ENCODE measurements at regions of chr5 and their contacts with region 1.

Region 1: DNA sequence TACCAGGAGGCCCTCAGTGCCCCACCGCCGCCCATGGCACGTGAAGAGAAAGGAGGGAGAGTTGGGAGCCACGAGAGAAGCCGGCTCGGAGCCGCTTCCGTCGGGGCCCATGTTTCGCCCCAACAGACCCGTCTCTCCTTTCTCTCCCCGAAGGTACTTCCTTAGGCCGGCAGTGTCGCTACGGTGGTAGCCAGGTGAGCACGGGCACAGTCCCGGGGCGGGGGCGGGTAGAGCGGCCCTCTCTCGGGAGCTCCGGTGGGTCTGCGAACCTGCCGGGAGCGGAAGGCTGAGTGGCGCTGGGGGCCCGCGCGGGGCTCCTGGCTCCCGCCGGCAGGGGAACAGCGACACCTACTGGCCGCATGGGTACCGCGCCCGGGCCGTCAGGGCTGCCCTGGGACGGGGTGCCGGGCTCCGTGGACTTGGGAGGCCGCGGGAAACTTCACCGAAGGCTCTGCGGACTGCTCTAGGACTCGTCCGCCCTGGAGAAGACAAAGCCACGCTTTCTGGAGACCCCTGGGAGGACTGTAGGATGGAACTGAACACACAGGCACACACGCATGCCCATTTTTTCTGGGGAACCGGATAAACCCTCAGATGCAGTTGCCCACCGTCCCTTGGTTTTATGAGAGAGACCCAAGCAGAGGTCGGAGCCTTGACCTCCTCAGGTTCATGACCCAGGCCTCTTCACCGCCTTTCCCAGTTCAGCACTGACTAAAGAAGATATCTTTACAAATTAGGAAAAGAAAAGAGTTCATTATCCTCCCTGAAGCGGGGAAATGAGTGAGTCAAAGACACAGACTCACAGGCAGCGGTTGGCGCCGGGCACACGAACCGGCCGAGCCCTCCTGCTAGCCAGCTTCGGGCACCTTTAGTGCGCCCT is 202.5 kb downstream of the MEF2C start:
- DNase-seq: peak; percentile 53 to 85 (median 78)
- H3K4me3 ChIP-seq: peak overlapping the region in 2 of 4 donors; percentile 27 to 45
- H3K27ac ChIP-seq: no peak overlapping the region
- H3K4me1 ChIP-seq: peaks cover 2 to 23% of the 10 kb centered on the region in 2 donors
- H3K27me3 ChIP-seq: peaks cover 39% of the 10 kb centered on the region
- CTCF ChIP-seq: peak; percentile 53 to 98 (median 90)
- POLR2A ChIP-seq: no peak

Region 2: DNA sequence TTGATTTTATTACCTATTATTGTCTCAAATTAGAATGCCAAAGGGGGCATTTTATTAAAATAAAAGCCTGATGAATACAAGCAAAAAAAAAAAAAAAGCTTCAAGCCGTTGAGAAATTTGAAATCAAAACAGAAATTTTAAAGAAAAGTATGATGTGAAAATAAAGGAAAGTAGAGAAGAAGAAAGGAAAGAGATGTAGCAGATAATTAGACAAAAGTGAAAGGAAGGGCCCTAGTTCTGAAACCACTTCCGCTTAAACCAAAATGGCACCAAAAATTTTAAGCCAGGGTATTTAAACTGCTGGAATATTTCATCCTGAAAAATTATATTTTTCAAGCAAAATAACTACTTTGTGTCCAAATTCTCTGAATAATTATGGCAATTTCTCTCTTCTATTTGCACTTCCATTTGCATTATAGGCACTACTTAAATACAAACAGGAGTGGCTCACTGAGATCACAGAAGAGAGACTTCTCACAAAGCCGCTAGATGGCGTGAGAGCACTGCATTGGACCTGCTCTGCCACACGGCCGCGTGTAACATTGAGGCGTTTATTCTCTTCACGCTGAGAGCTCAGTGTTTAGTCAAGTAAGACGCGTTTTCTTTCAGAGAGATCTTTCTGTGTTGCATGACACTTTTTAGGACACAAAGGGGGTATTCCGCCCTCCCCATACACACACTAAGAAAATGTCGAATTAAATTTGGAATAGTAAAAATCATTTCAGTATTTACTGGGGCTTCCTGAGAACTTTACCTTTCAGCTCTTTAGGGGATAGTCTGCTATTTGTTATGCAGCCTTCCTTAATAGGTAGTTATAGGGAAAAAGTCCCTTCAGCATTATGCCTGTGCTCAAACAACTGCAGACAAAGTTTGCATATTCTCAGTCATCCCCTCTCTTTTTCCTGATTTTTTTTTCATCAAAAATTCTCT is 899.4 kb before region 1 on chr5:
- intact Hi-C with region 1: loop called in 1 of 2 experiments (anchors 5 kb)
- DNase-seq: peak; percentile 73 to 91 (median 83)
- H3K4me3 ChIP-seq: no peak overlapping the region
- H3K27ac ChIP-seq: no peak overlapping the region
- H3K4me1 ChIP-seq: no peaks in the 10 kb centered on the region
- H3K27me3 ChIP-seq: peaks cover 28% of the 10 kb centered on the region
- CTCF ChIP-seq: peak; percentile 77 to 97 (median 91)
- POLR2A ChIP-seq: no peak

Region 3: GRCh38 chr5:87885758-87886157 is 794.7 kb before region 1 on chr5:
- intact Hi-C with region 1: loop called in 1 of 2 experiments (anchors 10 kb)
- DNase-seq: no peak
- H3K4me3 ChIP-seq: no peak overlapping the region
- H3K27ac ChIP-seq: no peak overlapping the region
- H3K4me1 ChIP-seq: no peaks in the 10 kb centered on the region
- H3K27me3 ChIP-seq: no peaks in the 10 kb centered on the region
- CTCF ChIP-seq: peak in 2 of 6 experiments; percentile 19 to 23
- POLR2A ChIP-seq: no peak

Region 4: GRCh38 chr5:88140856-88141752 is 539.4 kb before region 1 on chr5:
- intact Hi-C with region 1: loop called in 1 of 2 experiments (anchors 5 kb)
- DNase-seq: peak; percentile 97 to 99 (median 98)
- H3K4me3 ChIP-seq: peak overlapping the region in 2 of 4 donors; percentile 25 to 61
- H3K27ac ChIP-seq: peak overlapping the region; percentile 70 to 86 (median 83)
- H3K4me1 ChIP-seq: peaks cover 0 to 16% of the 10 kb centered on the region in 2 donors
- H3K27me3 ChIP-seq: no peaks in the 10 kb centered on the region
- CTCF ChIP-seq: peak; percentile 46 to 79 (median 66)
- POLR2A ChIP-seq: peak in 1 of 2 donors; percentile 87

Region 5: DNA sequence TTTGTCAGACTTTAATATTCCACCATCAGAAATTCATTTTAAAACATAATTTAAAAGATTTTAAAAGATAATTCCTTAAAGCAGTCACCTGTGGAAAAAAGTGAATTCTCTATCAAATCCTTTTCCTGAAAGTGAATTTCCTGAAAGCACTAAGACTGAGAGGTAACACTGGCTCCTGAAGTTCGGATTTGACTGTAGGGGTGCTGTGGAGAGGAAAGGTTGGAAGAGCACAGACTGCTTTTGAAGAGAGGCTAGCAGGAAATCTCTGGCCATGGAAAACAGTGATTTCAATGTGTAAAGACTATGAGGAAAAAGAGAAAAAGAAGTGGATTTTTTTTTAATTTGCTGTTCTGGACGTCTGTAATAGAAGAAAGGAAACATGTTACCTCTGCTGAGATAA is 376.1 kb before region 1 on chr5:
- intact Hi-C with region 1: no loop called
- DNase-seq: no peak
- H3K4me3 ChIP-seq: no peak overlapping the region
- H3K27ac ChIP-seq: no peak overlapping the region
- H3K4me1 ChIP-seq: no peaks in the 10 kb centered on the region
- H3K27me3 ChIP-seq: no peaks in the 10 kb centered on the region
- CTCF ChIP-seq: no peak
- POLR2A ChIP-seq: no peak

Region 6: GRCh38 chr5:89277816-89278215 is 597.3 kb after region 1 on chr5:
- intact Hi-C with region 1: no loop called
- DNase-seq: no peak
- H3K4me3 ChIP-seq: no peak overlapping the region
- H3K27ac ChIP-seq: no peak overlapping the region
- H3K4me1 ChIP-seq: no peaks in the 10 kb centered on the region
- H3K27me3 ChIP-seq: no peaks in the 10 kb centered on the region
- CTCF ChIP-seq: no peak
- POLR2A ChIP-seq: no peak

Measured in adrenal gland (tissue), 19 donors.